ENCODE measurements at regions of chr7 and their contacts with region 1.

Region 1: DNA sequence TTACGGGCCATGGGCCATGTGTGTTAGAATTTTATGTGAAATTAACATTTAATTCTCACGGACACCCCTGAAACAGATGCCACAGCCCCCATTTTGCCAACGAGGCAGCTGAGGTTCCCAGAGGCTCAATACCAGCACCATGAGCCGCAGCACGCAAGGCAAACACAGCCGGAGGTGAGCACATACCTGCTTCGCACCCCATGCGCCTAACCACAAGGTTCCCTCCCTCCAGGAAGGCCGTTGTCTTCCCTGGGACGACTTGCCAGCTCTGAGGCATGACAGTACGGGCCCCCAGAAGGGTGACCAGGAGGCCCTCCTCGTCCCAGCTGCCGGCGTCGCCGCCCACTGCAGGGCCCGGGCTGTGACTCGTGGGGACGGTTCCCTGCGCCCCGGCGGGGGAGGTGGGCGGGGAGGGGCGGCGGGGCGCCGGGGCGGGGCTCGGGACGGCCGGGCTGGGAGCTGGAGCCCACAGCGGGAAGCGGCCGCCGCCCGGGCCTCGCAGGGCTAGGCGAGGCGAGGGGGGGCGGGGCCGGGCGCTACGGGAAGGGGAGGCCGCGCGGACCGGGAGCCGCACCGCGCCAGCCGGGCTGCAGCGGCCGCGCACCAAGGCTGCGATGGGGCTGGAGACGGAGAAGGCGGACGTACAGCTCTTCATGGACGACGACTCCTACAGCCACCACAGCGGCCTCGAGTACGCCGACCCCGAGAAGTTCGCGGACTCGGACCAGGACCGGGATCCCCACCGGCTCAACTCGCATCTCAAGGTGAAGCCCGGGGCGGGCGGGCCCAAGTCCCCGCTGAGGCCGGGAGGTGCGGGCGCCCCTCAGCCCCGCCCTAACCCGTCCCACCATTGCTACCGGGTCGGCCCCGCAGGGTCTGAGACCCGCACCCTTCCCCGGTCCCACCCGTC is at the start of gene CAV2:
- DNase-seq: peak; percentile 86
- total RNA-seq, gene CAV2: 311 TPM

Region 2: DNA sequence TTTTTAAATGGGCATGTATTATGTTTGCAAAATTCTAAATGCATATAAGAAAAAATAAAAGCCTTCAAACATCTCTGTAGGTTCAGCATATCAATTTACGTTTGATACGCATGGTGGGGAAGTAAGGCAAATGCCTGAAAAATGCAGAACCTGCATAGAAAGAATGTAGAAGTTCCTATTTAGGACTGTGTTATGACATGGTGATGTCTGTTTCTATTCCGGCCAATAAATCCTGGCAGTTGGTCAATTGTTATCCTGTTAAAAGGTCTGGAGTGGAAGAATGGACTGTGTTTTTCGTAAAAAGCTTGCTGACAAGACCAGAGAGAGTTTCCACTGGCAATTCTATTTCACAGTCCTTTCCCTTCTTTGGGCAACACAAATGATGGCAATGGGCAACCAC is 49.5 kb before region 1 on chr7:
- intact Hi-C with region 1: loop called (anchors 2 kb)
- DNase-seq: no peak

Measured in cardiac septum (tissue), 1 donor.